ENCODE measurements at regions of chr3 and their contacts with region 1.

Region 1: DNA sequence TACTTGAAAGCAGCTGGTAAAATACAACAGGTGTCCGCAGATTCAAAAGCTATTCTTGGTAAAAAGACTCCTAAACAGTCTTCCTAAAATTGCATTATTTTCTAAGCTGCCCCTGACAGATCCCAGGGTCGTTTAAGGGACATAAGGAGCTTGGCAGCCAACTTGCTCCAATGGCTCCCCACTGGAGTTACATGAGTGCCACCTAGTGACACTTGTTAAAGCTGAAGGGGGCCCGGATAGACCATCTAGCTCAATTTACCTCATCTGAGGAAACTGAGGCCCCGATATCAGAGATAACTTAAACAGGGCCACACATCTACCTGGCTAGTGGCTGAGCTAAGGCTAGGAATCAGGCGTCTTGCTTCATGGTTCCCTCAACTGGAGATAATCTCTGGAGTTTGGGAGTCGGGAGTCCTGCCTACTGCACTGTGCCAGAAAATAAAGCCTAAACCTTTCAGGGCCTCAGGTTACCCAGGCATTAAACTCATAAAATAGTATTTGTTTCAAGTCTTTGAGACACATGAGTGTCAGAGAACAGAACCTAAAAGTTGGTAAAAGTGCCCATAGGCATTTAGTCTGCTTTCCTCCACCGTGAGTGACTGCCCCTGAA is 6.5 kb upstream of the TBC1D23 start:
- DNase-seq: peak; percentile 49
- H3K4me3 ChIP-seq: no peak overlapping the region
- H3K27ac ChIP-seq: peak overlapping the region; percentile 34 to 65 (median 44)
- H3K4me1 ChIP-seq: peaks cover 0 to 11% (median 6%) of the 10 kb centered on the region in 4 donors
- H3K27me3 ChIP-seq: no peaks in the 10 kb centered on the region
- CTCF ChIP-seq: peak; percentile 64 to 73 (median 69)
- EP300 ChIP-seq: no peak
- POLR2A ChIP-seq: no peak

Region 2: GRCh38 chr3:99833617-99834205 is 420.6 kb before region 1 on chr3:
- in situ Hi-C with region 1: loop called (anchors 5 kb)
- intact Hi-C with region 1: loop called (anchors 2 kb)
- DNase-seq: no peak
- H3K4me3 ChIP-seq: no peak overlapping the region
- H3K27ac ChIP-seq: peak overlapping the region in 1 of 4 donors; percentile 26
- H3K4me1 ChIP-seq: peaks cover 0 to 16% (median 5%) of the 10 kb centered on the region in 4 donors
- H3K27me3 ChIP-seq: no peaks in the 10 kb centered on the region
- CTCF ChIP-seq: no peak
- EP300 ChIP-seq: no peak
- POLR2A ChIP-seq: no peak

Region 3: GRCh38 chr3:100334488-100335351 is 80.4 kb after region 1 on chr3 and contains the start of gene NIT2:
- in situ Hi-C with region 1: no loop called
- intact Hi-C with region 1: no loop called
- DNase-seq: peak; percentile 88
- H3K4me3 ChIP-seq: peak within 1 kb of the TSS; percentile 62 to 92 (median 78)
- H3K27ac ChIP-seq: peak within 1 kb of the TSS; percentile 79 to 91 (median 86)
- H3K4me1 ChIP-seq: peaks cover 0 to 16% (median 8%) of the 10 kb centered on the region in 4 donors
- H3K27me3 ChIP-seq: no peaks in the 10 kb centered on the region
- CTCF ChIP-seq: no peak
- EP300 ChIP-seq: no peak
- POLR2A ChIP-seq: no peak
- total RNA-seq, gene NIT2: 13.8 to 25.1 (median 18.8) TPM

Region 4: GRCh38 chr3:100802126-100802525 is 547.9 kb after region 1 on chr3:
- in situ Hi-C with region 1: no loop called
- intact Hi-C with region 1: no loop called
- DNase-seq: no peak
- H3K4me3 ChIP-seq: no peak overlapping the region
- H3K27ac ChIP-seq: no peak overlapping the region
- H3K4me1 ChIP-seq: peaks cover 0 to 3% (median 0%) of the 10 kb centered on the region in 4 donors
- H3K27me3 ChIP-seq: no peaks in the 10 kb centered on the region
- CTCF ChIP-seq: no peak
- EP300 ChIP-seq: no peak
- POLR2A ChIP-seq: no peak